ENCODE measurements at regions of chr17 and their contacts with region 1.

Region 1: DNA sequence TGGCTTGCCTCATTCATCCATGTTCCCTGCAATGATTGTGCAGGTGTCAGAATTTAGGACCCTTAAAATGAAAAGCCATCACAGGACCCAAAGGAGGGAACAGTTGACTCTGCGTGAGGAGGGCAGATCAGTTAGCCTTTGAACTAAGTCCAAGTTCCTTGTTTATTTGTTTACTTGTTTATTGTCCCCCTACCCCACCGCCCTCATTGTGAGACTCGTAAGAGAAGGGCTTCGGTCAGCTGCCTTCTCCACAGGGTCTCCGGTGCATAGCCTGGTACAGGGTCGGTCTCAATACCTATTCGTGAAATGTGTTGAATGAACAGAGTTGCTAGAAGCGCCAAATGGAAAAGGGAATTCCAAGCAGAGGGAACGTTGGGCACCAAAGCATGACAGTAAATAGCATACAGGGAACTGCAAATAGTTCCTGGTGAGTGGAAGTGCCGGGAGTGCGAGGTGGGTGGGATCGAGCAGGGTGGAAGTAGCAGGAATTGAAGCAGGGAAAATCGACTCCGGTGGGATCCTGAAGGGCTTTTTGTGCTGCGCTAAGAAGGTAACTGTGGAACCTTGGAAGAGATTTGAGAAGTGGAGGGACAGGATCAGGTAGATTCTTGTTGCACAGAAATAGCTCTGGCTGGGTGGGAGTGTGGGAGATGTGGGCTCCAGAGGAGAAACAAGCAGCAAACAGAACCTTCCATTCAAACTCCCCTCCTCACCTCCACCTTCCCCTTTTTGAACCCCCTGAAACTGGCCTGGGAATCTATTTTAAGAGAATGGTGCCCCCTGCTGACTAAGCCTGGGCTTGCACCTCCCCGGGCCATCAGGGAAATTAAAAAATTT is 12.7 kb downstream of the SLC35B1 start:
- DNase-seq: peak; percentile 51 to 80 (median 70)
- ATAC-seq: peak; percentile 37 to 45
- H3K4me3 Mint-ChIP-seq: peak overlapping the region; percentile 22 to 80 (median 56)
- H3K27ac Mint-ChIP-seq: peak overlapping the region; percentile 89 to 96 (median 92)
- H3K4me1 Mint-ChIP-seq: peaks cover 45 to 61% (median 52%) of the 10 kb centered on the region in 4 donors
- H3K27me3 Mint-ChIP-seq: no peaks in the 10 kb centered on the region

Region 2: GRCh38 chr17:49570564-49571242 is 124.4 kb before region 1 on chr17:
- POLR2A ChIA-PET with region 1: interaction called, 17 read pairs
- DNase-seq: no peak
- ATAC-seq: no peak
- H3K4me3 Mint-ChIP-seq: peak overlapping the region in 9 of 10 donors; percentile 7 to 92 (median 68)
- H3K27ac Mint-ChIP-seq: peak overlapping the region in 2 of 10 donors; percentile 31 to 74
- H3K4me1 Mint-ChIP-seq: peaks cover 7 to 20% (median 19%) of the 10 kb centered on the region in 4 donors
- H3K27me3 Mint-ChIP-seq: peaks cover 10 to 40% (median 33%) of the 10 kb centered on the region in 5 donors

Region 3: DNA sequence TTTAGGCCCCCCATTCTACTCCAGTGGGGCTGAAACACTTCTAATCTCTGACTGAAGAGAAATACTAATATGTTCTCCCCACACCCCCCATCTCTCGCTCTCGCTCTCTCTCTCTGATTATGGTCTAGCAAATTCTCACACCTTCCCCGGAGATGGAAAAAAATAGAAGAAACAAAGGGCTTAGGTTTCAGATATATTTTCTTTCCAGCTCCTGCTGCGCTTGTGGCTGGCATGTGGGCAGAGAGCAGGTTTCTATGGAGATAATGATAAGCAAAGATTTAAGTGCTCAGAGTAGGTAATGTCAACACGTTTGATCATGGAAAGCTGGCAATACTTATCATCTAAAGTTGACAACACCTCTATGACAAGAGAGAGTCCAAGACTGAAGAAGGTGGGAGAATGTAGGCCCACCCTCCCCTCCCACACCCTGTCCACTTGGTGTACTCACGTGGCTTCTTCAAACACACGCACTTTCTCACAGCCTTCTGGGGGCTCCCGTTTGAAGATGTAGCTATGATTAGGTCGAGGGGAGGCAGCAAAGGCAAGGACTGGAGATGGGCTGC is 20.7 kb after region 1 on chr17:
- POLR2A ChIA-PET with region 1: no interaction called
- DNase-seq: peak in 4 of 10 donors; percentile 14 to 62 (median 26)
- ATAC-seq: peak; percentile 59 to 70
- H3K4me3 Mint-ChIP-seq: peak overlapping the region in 7 of 10 donors; percentile 11 to 80 (median 48)
- H3K27ac Mint-ChIP-seq: peak overlapping the region; percentile 77 to 97 (median 88)
- H3K4me1 Mint-ChIP-seq: peaks cover 6 to 43% (median 18%) of the 10 kb centered on the region in 4 donors
- H3K27me3 Mint-ChIP-seq: no peaks in the 10 kb centered on the region

Measured in naive thymus-derived CD8-positive, alpha-beta T cell (primary cell).